Left ventricle myocardium superior (tissue), 1 donor: ENCODE measurements at regions of chr4 and their contacts with region 1.

Region 1: DNA sequence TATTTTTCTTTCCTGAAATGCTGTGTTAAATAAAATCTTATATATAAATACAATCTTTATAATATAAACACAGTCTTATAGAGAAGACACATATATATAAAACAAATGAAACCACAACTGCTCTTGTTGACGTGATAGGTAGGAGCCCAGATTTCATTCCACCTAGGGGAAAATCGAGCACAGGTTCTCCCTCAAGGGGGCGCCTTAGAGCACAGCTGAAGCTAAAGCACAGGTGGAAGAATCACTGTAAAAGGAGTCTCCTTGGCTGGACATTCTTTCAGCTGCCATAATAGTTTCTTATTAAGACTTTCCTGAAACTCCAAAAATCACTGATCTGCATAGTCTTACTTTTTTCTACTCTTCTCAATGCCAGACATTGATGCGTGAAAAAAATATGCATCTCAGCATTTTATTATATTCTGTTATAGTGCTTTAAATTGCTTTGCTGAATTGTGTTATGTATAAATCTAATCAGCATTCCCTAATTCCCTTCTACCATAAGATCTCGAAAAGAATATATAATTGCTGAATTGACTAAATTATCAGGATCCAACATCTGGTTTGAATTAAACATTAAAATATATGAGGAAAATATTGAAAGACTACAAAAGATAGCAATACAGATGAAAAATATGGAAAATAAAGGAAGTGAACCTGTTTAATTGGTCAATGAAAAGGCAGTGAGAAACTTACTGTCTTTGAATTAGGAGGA is 25.5 kb upstream of the RXFP1 start:
- DNase-seq: peak; percentile 52
- ATAC-seq: peak; percentile 28

Region 2: DNA sequence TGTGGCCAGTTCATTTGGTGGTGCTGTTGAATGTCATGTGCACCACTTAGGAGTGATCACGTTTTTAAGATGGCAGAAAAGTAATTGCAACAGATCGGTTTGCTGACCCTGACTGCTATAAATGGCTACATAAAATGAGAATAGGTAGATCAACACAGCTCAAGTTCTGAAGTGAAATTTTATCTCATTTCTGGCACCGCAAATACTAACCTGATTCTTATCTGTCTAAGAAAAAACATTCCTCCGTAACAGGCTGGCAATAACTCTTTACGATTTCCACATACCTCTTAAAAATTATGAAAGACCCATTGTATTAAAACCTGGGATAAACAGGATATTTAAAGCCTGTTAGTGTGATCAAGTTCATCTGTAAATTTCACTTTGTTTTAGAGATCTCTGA is 1912.1 kb before region 1 on chr4:
- intact Hi-C with region 1: no loop called
- DNase-seq: no peak
- ATAC-seq: no peak

Region 3: GRCh38 chr4:158395889-158396288 is 100.3 kb before region 1 on chr4:
- intact Hi-C with region 1: no loop called
- DNase-seq: no peak
- ATAC-seq: no peak

Region 4: DNA sequence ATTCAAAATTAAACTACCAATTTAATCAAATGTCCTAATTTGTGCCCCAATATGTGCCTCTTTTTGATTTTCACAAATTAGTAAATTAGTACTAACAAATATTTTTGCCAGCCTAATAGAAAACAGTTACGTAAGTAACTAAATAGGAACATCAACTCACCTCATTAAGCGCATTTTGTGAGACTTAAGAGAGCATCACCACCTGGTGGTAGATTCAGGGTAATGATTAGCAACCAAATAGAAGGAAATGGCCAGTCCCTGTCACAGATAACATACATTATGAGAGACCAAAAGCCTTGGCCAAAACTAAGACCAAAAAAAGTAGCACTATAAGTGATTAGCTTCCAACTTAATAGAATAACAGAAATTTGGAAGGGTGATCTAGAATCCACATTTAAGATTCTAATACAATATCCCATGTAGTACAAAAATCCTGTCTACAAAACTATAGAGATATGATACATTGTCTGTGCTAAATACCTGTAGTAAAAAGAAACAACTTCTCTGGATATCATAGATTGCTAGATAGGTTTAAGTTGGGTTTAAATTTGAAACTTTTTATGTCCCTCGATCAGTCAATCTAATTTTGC is 128.8 kb after region 1 on chr4:
- intact Hi-C with region 1: loop called (anchors 10 kb)
- DNase-seq: no peak
- ATAC-seq: peak; percentile 86